Activated CD8-positive, alpha-beta T cell treated with anti-CD3 and anti-CD28 coated beads, Interleukin-2, amount 10 ng/mL, durations not matched to agents 7 days and 5 days (primary cell): ENCODE measurements at regions of chr16 and their contacts with region 1.

Region 1: GRCh38 chr16:3234543-3235541 is at the start of gene ZNF200:
- DNase-seq: peak; percentile 97
- ATAC-seq: peak; percentile 93
- H3K4me3 Mint-ChIP-seq: peak within 1 kb of the TSS; percentile 90
- H3K27ac Mint-ChIP-seq: peak within 1 kb of the TSS; percentile 99
- H3K4me1 Mint-ChIP-seq: peaks cover 34% of the 10 kb centered on the region
- H3K27me3 Mint-ChIP-seq: no peaks in the 10 kb centered on the region
- total RNA-seq, gene ZNF200: 13.7 to 18.4 TPM

Region 2: GRCh38 chr16:3188925-3189825 is 45.7 kb before region 1 on chr16:
- CTCF ChIA-PET with region 1: interaction called, 3 read pairs
- POLR2A ChIA-PET with region 1: interaction called, 10 read pairs
- DNase-seq: peak; percentile 63
- ATAC-seq: peak; percentile 45
- H3K4me3 Mint-ChIP-seq: peak overlapping the region; percentile 68
- H3K27ac Mint-ChIP-seq: peak overlapping the region; percentile 70
- H3K4me1 Mint-ChIP-seq: peaks cover 53% of the 10 kb centered on the region
- H3K27me3 Mint-ChIP-seq: peaks cover 56% of the 10 kb centered on the region

Region 3: GRCh38 chr16:3214904-3215600 is 19.8 kb before region 1 on chr16:
- CTCF ChIA-PET with region 1: interaction called, 3 read pairs
- POLR2A ChIA-PET with region 1: interaction called, 16 read pairs
- DNase-seq: peak; percentile 69
- ATAC-seq: peak; percentile 84
- H3K4me3 Mint-ChIP-seq: peak overlapping the region; percentile 24
- H3K27ac Mint-ChIP-seq: peak overlapping the region; percentile 97
- H3K4me1 Mint-ChIP-seq: peaks cover 39% of the 10 kb centered on the region
- H3K27me3 Mint-ChIP-seq: no peaks in the 10 kb centered on the region